Psoas muscle (tissue), 8 donors: ENCODE measurements at regions of chr3 and their contacts with region 1.

Region 1: DNA sequence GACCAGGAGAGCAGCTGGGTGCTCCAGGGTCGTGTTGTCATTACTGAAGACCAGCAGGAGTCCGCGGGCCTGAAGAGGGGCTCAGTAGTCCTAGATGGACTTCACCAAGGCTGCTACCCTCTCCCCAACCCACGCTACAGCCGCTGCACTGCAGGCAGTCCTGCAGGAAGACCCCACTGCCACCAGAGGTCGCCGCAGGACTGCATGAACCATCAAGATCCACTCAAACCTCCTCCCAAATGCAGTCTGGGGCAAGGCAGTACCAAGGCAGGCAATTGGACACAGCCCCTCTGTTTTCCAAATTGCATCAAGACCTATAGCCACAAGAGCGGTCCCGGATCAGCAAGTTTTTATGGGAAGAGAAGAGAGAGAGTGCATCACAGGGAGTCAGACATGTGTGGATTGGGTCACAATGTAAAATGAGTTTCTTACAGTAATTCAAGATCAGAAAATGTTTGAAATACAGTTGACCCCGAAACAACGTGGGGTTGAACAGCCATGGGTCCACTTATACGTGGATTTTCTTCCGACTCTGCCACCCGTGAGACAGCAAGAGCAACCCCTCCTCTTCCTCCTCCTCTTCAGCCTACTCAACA is 46.7 kb downstream of the DZIP1L start:
- DNase-seq: peak; percentile 80 to 88
- ATAC-seq: peak; percentile 91 to 98 (median 93)
- H3K4me3 ChIP-seq: no peak overlapping the region
- H3K27ac ChIP-seq: no peak overlapping the region
- H3K4me1 ChIP-seq: no peaks in the 10 kb centered on the region
- H3K27me3 ChIP-seq: no peaks in the 10 kb centered on the region
- CTCF ChIP-seq: peak; percentile 97

Region 2: GRCh38 chr3:138051946-138052802 is 16.5 kb before region 1 on chr3:
- intact Hi-C with region 1: no loop called
- DNase-seq: no peak
- ATAC-seq: peak in 2 of 4 donors; percentile 37 to 46
- H3K4me3 ChIP-seq: no peak overlapping the region
- H3K27ac ChIP-seq: no peak overlapping the region
- H3K4me1 ChIP-seq: no peaks in the 10 kb centered on the region
- H3K27me3 ChIP-seq: no peaks in the 10 kb centered on the region
- CTCF ChIP-seq: peak; percentile 53

Region 3: GRCh38 chr3:138118612-138119422 is 50.1 kb after region 1 on chr3:
- intact Hi-C with region 1: loop called (anchors 1 kb)
- DNase-seq: peak; percentile 68 to 76
- ATAC-seq: peak; percentile 72 to 83 (median 74)
- H3K4me3 ChIP-seq: no peak overlapping the region
- H3K27ac ChIP-seq: no peak overlapping the region
- H3K4me1 ChIP-seq: peaks cover 7% of the 10 kb centered on the region
- H3K27me3 ChIP-seq: no peaks in the 10 kb centered on the region
- CTCF ChIP-seq: peak; percentile 75

Region 4: GRCh38 chr3:138426226-138426625 is 357.5 kb after region 1 on chr3:
- intact Hi-C with region 1: loop called in 1 of 2 experiments (anchors 10 kb)
- DNase-seq: no peak
- ATAC-seq: peak in 1 of 4 donors; percentile 52
- H3K4me3 ChIP-seq: no peak overlapping the region
- H3K27ac ChIP-seq: no peak overlapping the region
- H3K4me1 ChIP-seq: no peaks in the 10 kb centered on the region
- H3K27me3 ChIP-seq: no peaks in the 10 kb centered on the region
- CTCF ChIP-seq: peak; percentile 27